Activated T-helper 1 cell treated with anti-CD3 and anti-CD28 coated beads, Interleukin-12 subunit alpha, Interleukin-12 subunit beta, Interleukin-2, Interleukin-4 antibody, amounts not matched to agents 30 ng/mL and 10 ng/mL and 1 ng/mL, durations not matched to agents 14 hours and 24 hours and 36 hours (primary cell): ENCODE measurements at regions of chr7 and their contacts with region 1.

Region 1: DNA sequence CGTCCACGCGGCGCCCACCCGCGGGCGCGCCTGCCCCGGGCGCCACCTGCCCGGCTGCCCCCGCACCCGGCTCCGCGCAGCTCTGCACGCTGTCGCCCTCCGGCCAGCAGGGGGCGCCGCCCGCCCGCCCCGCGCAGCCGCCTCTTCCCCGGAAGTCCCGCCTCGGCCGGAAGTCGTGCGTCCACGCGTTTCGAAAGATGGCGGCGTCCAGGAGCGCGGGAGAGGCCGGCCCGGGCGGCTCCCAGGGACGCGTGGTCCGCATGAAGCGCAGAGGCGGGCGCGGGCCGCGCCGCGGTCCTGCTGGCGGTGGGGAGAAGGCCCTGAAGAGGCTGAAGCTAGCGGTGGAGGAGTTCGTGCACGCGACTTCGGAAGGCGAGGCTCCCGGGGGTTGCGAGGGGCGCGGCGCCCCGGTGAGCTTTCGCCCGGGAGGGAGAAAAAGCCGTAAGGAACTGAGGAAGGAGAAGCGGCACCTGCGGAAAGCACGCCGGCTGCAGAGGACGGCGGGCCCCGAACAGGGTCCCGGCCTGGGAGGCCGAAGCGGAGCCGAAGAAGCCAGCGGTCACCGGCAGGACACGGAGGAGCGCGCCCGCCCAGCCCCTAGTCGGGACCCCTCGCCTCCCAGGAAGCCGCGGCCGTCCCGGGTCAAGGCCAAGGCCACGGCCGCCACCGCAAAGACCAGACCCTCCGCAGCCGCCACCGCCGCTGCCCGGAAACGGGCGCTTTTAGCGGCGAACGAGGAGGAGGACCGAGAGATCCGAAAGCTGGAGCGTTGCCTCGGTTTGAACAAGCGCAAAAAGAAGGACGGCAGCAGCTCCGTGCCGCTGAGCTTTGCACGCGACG is at the start of gene NOM1:
- DNase-seq: peak; percentile 86
- H3K4me3 Mint-ChIP-seq: peak within 1 kb of the TSS; percentile 97
- H3K27ac Mint-ChIP-seq: peak within 1 kb of the TSS; percentile 97
- H3K4me1 Mint-ChIP-seq: peaks cover 15% of the 10 kb centered on the region
- H3K27me3 Mint-ChIP-seq: peaks cover 2% of the 10 kb centered on the region
- total RNA-seq, gene NOM1: 46.4 and 50.9 TPM in 2 replicates

Region 2: GRCh38 chr7:156493942-156494341 is 455.8 kb before region 1 on chr7:
- intact Hi-C with region 1: no loop called
- DNase-seq: no peak
- H3K4me3 Mint-ChIP-seq: no peak overlapping the region
- H3K27ac Mint-ChIP-seq: no peak overlapping the region
- H3K4me1 Mint-ChIP-seq: no peaks in the 10 kb centered on the region
- H3K27me3 Mint-ChIP-seq: no peaks in the 10 kb centered on the region

Region 3: DNA sequence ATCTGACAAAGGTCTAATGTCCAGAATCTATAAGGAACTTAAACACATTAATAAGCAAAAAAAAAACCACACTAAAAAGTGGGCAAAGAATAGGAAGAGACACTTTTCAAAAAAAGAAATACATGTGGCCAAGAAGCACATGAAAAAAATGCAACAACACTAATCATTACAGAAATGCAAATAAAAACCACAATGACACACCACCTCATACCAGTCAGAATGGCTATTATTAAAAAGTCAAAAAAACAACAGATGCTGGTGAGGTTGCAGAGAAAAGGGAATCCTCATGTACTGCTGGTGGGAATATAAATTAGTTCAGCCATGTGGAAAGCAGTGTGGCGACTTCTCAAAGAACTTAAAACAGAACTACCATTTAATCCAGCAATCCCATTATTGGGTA is 175.8 kb before region 1 on chr7:
- intact Hi-C with region 1: loop called (anchors 10 kb)
- DNase-seq: no peak
- H3K4me3 Mint-ChIP-seq: no peak overlapping the region
- H3K27ac Mint-ChIP-seq: no peak overlapping the region
- H3K4me1 Mint-ChIP-seq: peaks cover 53% of the 10 kb centered on the region
- H3K27me3 Mint-ChIP-seq: no peaks in the 10 kb centered on the region

Region 4: GRCh38 chr7:156892821-156893706 is 56.7 kb before region 1 on chr7 and contains the start of gene LMBR1:
- intact Hi-C with region 1: loop called (anchors 1 kb)
- DNase-seq: peak; percentile 92
- H3K4me3 Mint-ChIP-seq: peak within 1 kb of the TSS; percentile 95
- H3K27ac Mint-ChIP-seq: peak within 1 kb of the TSS; percentile 93
- H3K4me1 Mint-ChIP-seq: peaks cover 43% of the 10 kb centered on the region
- H3K27me3 Mint-ChIP-seq: no peaks in the 10 kb centered on the region
- total RNA-seq, gene LMBR1: 53.5 and 55.5 TPM in 2 replicates

Region 5: GRCh38 chr7:156927571-156928405 is 22.0 kb before region 1 on chr7:
- intact Hi-C with region 1: loop called (anchors 1 kb)
- DNase-seq: no peak
- H3K4me3 Mint-ChIP-seq: no peak overlapping the region
- H3K27ac Mint-ChIP-seq: no peak overlapping the region
- H3K4me1 Mint-ChIP-seq: peaks cover 63% of the 10 kb centered on the region
- H3K27me3 Mint-ChIP-seq: peaks cover 29% of the 10 kb centered on the region

Region 6: DNA sequence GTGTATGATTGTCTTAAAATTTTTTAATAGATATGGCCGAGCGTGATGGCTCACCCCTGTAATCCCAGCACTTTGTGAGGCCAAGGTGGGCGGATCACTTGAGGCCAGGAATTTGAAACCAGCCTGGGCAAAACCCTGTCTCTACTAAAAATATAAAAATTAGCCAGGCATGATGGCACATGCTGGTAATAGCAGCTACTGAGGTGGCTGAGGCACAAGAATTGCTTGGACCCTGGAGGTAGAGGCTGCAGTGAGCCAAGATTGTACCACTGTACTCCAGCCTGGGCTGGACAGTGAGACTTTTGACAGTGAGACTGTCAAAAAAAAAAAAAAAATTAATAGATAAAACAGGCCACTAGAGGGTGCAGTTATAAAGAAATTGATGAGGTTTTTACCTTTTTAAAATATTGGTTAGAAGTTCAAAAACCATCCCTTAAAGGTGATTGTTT is 20.2 kb after region 1 on chr7:
- intact Hi-C with region 1: loop called (anchors 2 kb)
- DNase-seq: no peak
- H3K4me3 Mint-ChIP-seq: no peak overlapping the region
- H3K27ac Mint-ChIP-seq: no peak overlapping the region
- H3K4me1 Mint-ChIP-seq: no peaks in the 10 kb centered on the region
- H3K27me3 Mint-ChIP-seq: no peaks in the 10 kb centered on the region

Region 7: DNA sequence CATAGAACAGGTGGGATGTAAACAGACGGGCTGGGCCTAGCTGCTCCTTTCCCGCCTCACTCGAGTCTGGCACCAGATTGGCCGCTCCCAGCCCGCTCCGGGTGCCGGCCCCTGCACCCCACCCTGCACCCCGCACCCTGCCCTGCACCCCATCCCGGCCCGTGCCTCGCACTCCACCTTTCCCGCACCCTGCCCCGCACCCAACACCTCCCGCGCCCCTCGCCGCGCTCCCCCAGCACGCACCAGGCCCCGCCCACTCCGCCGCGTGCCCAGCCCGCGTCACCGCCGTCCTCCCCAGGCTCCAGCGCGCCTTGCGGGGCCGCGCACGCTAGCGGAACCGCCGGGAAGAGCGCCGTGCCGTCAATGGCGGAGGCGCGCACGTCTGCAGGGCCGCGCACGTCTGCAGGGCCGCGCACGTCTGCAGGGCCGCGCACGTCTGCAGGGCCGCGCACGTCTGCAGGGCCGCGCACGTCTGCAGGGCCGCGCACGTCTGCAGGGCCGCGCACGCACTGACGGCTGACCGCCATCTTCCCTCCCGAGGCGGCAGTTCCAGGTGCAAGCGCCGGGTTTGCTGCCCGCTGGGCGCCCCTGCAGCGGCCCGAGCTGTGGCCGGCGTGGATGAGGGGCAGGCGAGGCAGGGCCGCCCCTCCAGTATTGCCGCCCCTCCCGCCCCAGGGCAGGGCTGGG is 188.8 kb after region 1 on chr7 and contains the start of gene UBE3C:
- intact Hi-C with region 1: loop called (anchors 1 kb)
- DNase-seq: peak; percentile 89
- H3K4me3 Mint-ChIP-seq: peak within 1 kb of the TSS; percentile 88
- H3K27ac Mint-ChIP-seq: peak within 1 kb of the TSS; percentile 97
- H3K4me1 Mint-ChIP-seq: peaks cover 41% of the 10 kb centered on the region
- H3K27me3 Mint-ChIP-seq: no peaks in the 10 kb centered on the region
- total RNA-seq, gene UBE3C: 91.5 and 95.8 TPM in 2 replicates